ENCODE measurements at regions of chr7 and their contacts with region 1.

Region 1: GRCh38 chr7:55255496-55256435 is 109.4 kb upstream of the LANCL2 start:
- ATAC-seq: peak; percentile 70 to 82 (median 74)
- H3K4me3 ChIP-seq: peak overlapping the region; percentile 37 to 49 (median 43)
- H3K27ac ChIP-seq: no peak overlapping the region
- H3K4me1 ChIP-seq: peaks cover 0 to 4% of the 10 kb centered on the region in 2 donors

Region 2: GRCh38 chr7:54773472-54774399 is 482.0 kb before region 1 on chr7:
- in situ Hi-C with region 1: loop called in 3 of 9 experiments (anchors 5 to 10 kb)
- ATAC-seq: peak; percentile 82 to 99 (median 92)
- H3K4me3 ChIP-seq: peak overlapping the region in 2 of 5 donors; percentile 0 to 6
- H3K27ac ChIP-seq: no peak overlapping the region
- H3K4me1 ChIP-seq: no peaks in the 10 kb centered on the region

Region 3: GRCh38 chr7:55048221-55048859 is 207.4 kb before region 1 on chr7:
- in situ Hi-C with region 1: loop called in 1 of 9 experiments (anchors 25 kb)
- ATAC-seq: peak in 2 of 8 experiments; percentile 60 to 62
- H3K4me3 ChIP-seq: no peak overlapping the region
- H3K27ac ChIP-seq: no peak overlapping the region
- H3K4me1 ChIP-seq: peaks cover 0 to 13% of the 10 kb centered on the region in 2 donors

Region 4: DNA sequence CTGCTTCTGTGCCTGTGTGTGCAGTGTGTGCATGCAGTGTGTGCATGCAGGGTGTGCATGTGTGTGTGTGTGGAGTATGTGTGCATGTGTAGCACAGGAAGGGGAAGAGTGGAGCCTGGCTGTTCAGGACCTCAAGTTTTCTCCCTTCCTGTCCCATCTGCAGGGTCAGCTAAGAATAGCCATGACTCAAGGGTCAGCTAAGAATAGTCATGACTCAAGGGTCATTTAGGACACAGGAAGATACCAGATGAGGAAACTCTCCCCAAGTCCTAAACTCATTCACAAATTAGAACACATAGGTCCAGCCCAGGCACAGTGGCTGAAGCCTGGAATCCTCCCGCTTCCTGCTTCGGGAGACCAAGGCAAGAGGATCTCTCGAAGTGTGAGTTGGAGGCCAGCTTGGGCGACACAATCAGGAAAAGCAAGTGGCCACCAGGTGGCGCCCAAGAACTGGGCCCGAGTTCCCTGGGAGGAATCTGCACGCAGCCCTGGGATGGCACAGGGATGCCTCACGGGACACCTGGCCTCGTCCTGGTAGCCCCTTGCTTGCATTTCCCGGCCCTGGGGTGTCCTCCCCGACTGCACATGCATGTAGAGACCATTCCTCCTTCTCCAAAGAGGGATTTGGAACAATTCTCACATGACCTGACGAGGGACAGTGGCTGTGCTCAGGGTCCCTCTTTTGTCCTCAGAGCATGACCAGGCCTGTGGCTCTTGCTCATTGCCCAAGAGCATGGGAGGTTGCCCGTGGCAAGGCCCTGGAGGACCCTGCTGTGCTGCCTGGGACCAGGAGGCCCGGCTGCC is 338.0 kb after region 1 on chr7:
- in situ Hi-C with region 1: loop called in 1 of 9 experiments (anchors 25 kb)
- ATAC-seq: peak; percentile 27 to 94 (median 58)
- H3K4me3 ChIP-seq: no peak overlapping the region
- H3K27ac ChIP-seq: no peak overlapping the region
- H3K4me1 ChIP-seq: no peaks in the 10 kb centered on the region